ENCODE measurements at regions of chr1 and their contacts with region 1.

Region 1: DNA sequence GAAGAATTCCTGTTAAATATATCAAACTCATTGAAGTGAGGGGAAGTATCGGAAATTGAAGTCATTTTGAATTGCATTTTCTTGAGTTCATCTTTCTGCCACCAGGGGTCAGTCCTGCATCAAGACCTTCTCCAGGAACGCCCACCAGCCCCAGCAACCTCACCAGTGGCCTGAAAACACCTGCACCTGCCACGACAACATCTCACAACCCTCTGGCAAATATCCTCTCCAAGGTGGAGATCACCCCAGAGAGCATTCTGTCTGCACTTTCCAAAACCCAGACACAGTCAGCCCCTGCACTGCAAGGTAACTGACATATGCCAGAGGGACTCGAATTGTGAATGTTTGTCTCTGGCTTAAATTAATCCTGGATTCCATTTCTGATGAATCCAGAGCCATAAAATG is 22.8 kb upstream of the TARS2 start:
- DNase-seq: peak; percentile 36 to 76 (median 70)
- ATAC-seq: peak; percentile 90
- H3K4me3 ChIP-seq: no peak overlapping the region
- H3K4me3 Mint-ChIP-seq: peak overlapping the region in 1 of 10 donors; percentile 29
- H3K27ac ChIP-seq: no peak overlapping the region
- H3K27ac Mint-ChIP-seq: peak overlapping the region in 7 of 9 donors; percentile 12 to 86 (median 52)
- H3K4me1 ChIP-seq: no peaks in the 10 kb centered on the region
- H3K4me1 Mint-ChIP-seq: peaks cover 0 to 5% (median 5%) of the 10 kb centered on the region in 7 donors
- H3K27me3 ChIP-seq: no peaks in the 10 kb centered on the region
- H3K27me3 Mint-ChIP-seq: no peaks in the 10 kb centered on the region

Region 2: GRCh38 chr1:150387200-150387599 is 77.2 kb before region 1 on chr1:
- CTCF ChIA-PET with region 1: no interaction called
- POLR2A ChIA-PET with region 1: no interaction called
- intact Hi-C with region 1: no loop called
- DNase-seq: no peak
- ATAC-seq: no peak
- H3K4me3 ChIP-seq: no peak overlapping the region
- H3K4me3 Mint-ChIP-seq: peak overlapping the region in 8 of 10 donors; percentile 3 to 53 (median 12)
- H3K27ac ChIP-seq: no peak overlapping the region
- H3K27ac Mint-ChIP-seq: peak overlapping the region in 7 of 9 donors; percentile 3 to 75 (median 25)
- H3K4me1 ChIP-seq: peaks cover 5 to 17% of the 10 kb centered on the region in 2 donors
- H3K4me1 Mint-ChIP-seq: peaks cover 27 to 76% (median 62%) of the 10 kb centered on the region in 7 donors
- H3K27me3 ChIP-seq: no peaks in the 10 kb centered on the region
- H3K27me3 Mint-ChIP-seq: no peaks in the 10 kb centered on the region

Region 3: DNA sequence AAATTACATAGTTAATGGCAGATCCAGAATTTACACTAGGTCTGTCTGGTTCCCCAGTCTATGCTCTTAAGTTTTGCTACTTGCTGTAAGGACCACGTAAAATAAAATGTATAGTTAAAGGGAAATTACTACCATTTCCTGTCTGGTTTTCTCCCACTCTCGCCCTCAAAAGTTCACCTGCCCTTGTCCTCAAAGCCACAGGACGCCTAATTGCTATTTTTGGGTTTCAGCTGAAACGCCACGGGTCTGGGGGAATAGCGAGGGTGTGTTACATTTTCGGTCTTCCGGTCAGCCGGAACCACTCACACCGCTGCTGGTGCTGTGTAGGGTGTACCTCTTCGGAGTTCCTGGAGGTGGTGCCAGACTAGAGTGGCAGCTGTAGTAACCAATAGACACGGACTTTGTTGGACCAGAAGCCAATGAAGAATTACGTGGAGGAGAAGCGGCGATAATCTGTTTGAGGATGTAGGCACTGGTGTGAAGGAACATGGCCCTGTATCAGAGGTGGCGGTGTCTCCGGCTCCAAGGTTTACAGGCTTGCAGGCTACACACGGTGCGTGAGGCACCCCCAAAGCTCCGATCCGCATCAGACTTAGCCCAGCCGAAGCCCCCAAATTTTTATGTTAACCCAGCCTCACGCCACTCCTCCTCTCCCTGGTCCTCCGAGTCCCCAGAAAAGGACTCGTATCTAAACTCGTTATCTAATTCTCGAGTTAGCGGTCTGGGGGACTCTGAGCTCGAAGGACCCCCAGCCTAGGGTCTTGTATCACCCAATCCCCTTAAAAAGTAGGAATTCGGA is 22.7 kb after region 1 on chr1 and contains the start of gene TARS2:
- CTCF ChIA-PET with region 1: interaction called, 3 read pairs
- POLR2A ChIA-PET with region 1: no interaction called
- intact Hi-C with region 1: loop called in 1 of 2 experiments (anchors 1 kb)
- DNase-seq: peak; percentile 71 to 97 (median 95)
- ATAC-seq: peak; percentile 100
- H3K4me3 ChIP-seq: peak within 1 kb of the TSS; percentile 95
- H3K4me3 Mint-ChIP-seq: peak within 1 kb of the TSS; percentile 91 to 100 (median 96)
- H3K27ac ChIP-seq: peak within 1 kb of the TSS; percentile 83
- H3K27ac Mint-ChIP-seq: peak within 1 kb of the TSS; percentile 92 to 100 (median 99)
- H3K4me1 ChIP-seq: peaks cover 4 to 8% of the 10 kb centered on the region in 2 donors
- H3K4me1 Mint-ChIP-seq: peaks cover 5 to 28% (median 20%) of the 10 kb centered on the region in 7 donors
- H3K27me3 ChIP-seq: no peaks in the 10 kb centered on the region
- H3K27me3 Mint-ChIP-seq: no peaks in the 10 kb centered on the region
- total RNA-seq, gene TARS2: 30.3 to 39.0 (median 36.4) TPM

Region 4: GRCh38 chr1:150532868-150533302 is 68.5 kb after region 1 on chr1:
- CTCF ChIA-PET with region 1: interaction called, 4 read pairs
- POLR2A ChIA-PET with region 1: no interaction called
- intact Hi-C with region 1: loop called in 1 of 2 experiments (anchors 1 kb)
- DNase-seq: no peak
- ATAC-seq: no peak
- H3K4me3 ChIP-seq: no peak overlapping the region
- H3K4me3 Mint-ChIP-seq: no peak overlapping the region
- H3K27ac ChIP-seq: no peak overlapping the region
- H3K27ac Mint-ChIP-seq: no peak overlapping the region
- H3K4me1 ChIP-seq: no peaks in the 10 kb centered on the region
- H3K4me1 Mint-ChIP-seq: peaks cover 0 to 6% (median 4%) of the 10 kb centered on the region in 7 donors
- H3K27me3 ChIP-seq: no peaks in the 10 kb centered on the region
- H3K27me3 Mint-ChIP-seq: peaks cover 0 to 5% (median 0%) of the 10 kb centered on the region in 5 donors

Region 5: GRCh38 chr1:150798525-150798924 is 334.1 kb after region 1 on chr1:
- CTCF ChIA-PET with region 1: no interaction called
- POLR2A ChIA-PET with region 1: no interaction called
- intact Hi-C with region 1: no loop called
- DNase-seq: no peak
- ATAC-seq: no peak
- H3K4me3 ChIP-seq: no peak overlapping the region
- H3K4me3 Mint-ChIP-seq: no peak overlapping the region
- H3K27ac ChIP-seq: no peak overlapping the region
- H3K27ac Mint-ChIP-seq: peak overlapping the region in 1 of 9 donors; percentile 1
- H3K4me1 ChIP-seq: no peaks in the 10 kb centered on the region
- H3K4me1 Mint-ChIP-seq: no peaks in the 10 kb centered on the region
- H3K27me3 ChIP-seq: no peaks in the 10 kb centered on the region
- H3K27me3 Mint-ChIP-seq: no peaks in the 10 kb centered on the region

Region 6: DNA sequence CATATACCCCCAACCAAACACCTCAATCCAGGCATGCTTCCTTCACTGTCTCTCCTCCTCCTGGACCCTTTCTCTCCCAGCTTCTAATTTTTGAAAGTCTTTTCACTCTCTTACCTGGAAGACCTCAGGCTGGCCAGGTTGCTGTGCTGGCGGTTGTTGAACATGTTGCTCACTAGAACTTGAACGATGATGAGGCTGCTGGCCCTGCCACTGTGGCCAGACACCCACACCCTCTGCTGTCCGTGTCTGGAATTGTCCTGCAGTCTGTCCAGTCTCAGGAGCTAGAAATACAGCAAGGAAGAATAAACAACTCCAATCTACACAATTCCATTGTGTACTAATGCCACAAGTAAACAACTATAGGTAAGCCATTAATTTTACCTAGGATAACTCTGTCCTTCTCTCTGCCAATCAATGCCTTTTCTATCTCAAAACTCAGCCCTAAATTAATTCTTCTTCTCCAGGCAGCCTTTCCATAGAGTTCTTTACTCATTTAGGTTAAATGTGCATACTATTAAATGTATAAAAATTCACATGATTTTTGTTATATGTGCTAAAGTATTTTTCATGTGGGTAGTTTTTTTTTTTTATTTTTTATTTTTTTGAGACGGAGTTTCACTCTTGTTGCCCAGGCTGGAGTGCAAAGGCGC is 348.8 kb after region 1 on chr1:
- CTCF ChIA-PET with region 1: no interaction called
- POLR2A ChIA-PET with region 1: no interaction called
- intact Hi-C with region 1: loop called in 1 of 2 experiments (anchors 5 kb)
- DNase-seq: no peak
- ATAC-seq: peak; percentile 61
- H3K4me3 ChIP-seq: no peak overlapping the region
- H3K4me3 Mint-ChIP-seq: no peak overlapping the region
- H3K27ac ChIP-seq: no peak overlapping the region
- H3K27ac Mint-ChIP-seq: no peak overlapping the region
- H3K4me1 ChIP-seq: no peaks in the 10 kb centered on the region
- H3K4me1 Mint-ChIP-seq: peaks cover 1 to 7% (median 2%) of the 10 kb centered on the region in 7 donors
- H3K27me3 ChIP-seq: no peaks in the 10 kb centered on the region
- H3K27me3 Mint-ChIP-seq: no peaks in the 10 kb centered on the region

Region 7: GRCh38 chr1:150995896-150996295 is 531.5 kb after region 1 on chr1:
- CTCF ChIA-PET with region 1: no interaction called
- POLR2A ChIA-PET with region 1: no interaction called
- intact Hi-C with region 1: loop called in 1 of 2 experiments (anchors 10 kb)
- DNase-seq: peak in 2 of 9 donors; percentile 22 to 41
- ATAC-seq: peak; percentile 75
- H3K4me3 ChIP-seq: no peak overlapping the region
- H3K4me3 Mint-ChIP-seq: no peak overlapping the region
- H3K27ac ChIP-seq: peak overlapping the region; percentile 41
- H3K27ac Mint-ChIP-seq: peak overlapping the region; percentile 19 to 91 (median 69)
- H3K4me1 ChIP-seq: peaks cover 3 to 21% of the 10 kb centered on the region in 2 donors
- H3K4me1 Mint-ChIP-seq: peaks cover 5 to 25% (median 21%) of the 10 kb centered on the region in 7 donors
- H3K27me3 ChIP-seq: no peaks in the 10 kb centered on the region
- H3K27me3 Mint-ChIP-seq: no peaks in the 10 kb centered on the region